ENCODE measurements at regions of chr7 and their contacts with region 1.

Region 1: GRCh38 chr7:140640727-140641523 is at the start of gene DENND2A:
- H3K4me3 ChIP-seq: peak within 1 kb of the TSS; percentile 68
- H3K27ac ChIP-seq: peak within 1 kb of the TSS; percentile 38; the same call in 1 of the 2 replicates
- H3K4me1 ChIP-seq: no peaks in the 10 kb centered on the region
- CTCF ChIP-seq: no peak

Region 2: GRCh38 chr7:140342727-140343514 is 298.0 kb before region 1 on chr7:
- CTCF ChIA-PET with region 1: no interaction called
- POLR2A ChIA-PET with region 1: no interaction called
- H3K4me3 ChIP-seq: no peak overlapping the region
- H3K27ac ChIP-seq: no peak overlapping the region
- H3K4me1 ChIP-seq: no peaks in the 10 kb centered on the region
- CTCF ChIP-seq: no peak; the same call in 1 of the 2 replicates

Region 3: GRCh38 chr7:140581411-140581810 is 59.5 kb before region 1 on chr7:
- CTCF ChIA-PET with region 1: no interaction called
- POLR2A ChIA-PET with region 1: no interaction called
- H3K4me3 ChIP-seq: no peak overlapping the region
- H3K27ac ChIP-seq: no peak overlapping the region
- H3K4me1 ChIP-seq: no peaks in the 10 kb centered on the region
- CTCF ChIP-seq: no peak

Region 4: GRCh38 chr7:140609646-140610045 is 31.3 kb before region 1 on chr7:
- CTCF ChIA-PET with region 1: no interaction called
- POLR2A ChIA-PET with region 1: no interaction called
- H3K4me3 ChIP-seq: no peak overlapping the region
- H3K27ac ChIP-seq: no peak overlapping the region
- H3K4me1 ChIP-seq: no peaks in the 10 kb centered on the region
- CTCF ChIP-seq: no peak

Region 5: DNA sequence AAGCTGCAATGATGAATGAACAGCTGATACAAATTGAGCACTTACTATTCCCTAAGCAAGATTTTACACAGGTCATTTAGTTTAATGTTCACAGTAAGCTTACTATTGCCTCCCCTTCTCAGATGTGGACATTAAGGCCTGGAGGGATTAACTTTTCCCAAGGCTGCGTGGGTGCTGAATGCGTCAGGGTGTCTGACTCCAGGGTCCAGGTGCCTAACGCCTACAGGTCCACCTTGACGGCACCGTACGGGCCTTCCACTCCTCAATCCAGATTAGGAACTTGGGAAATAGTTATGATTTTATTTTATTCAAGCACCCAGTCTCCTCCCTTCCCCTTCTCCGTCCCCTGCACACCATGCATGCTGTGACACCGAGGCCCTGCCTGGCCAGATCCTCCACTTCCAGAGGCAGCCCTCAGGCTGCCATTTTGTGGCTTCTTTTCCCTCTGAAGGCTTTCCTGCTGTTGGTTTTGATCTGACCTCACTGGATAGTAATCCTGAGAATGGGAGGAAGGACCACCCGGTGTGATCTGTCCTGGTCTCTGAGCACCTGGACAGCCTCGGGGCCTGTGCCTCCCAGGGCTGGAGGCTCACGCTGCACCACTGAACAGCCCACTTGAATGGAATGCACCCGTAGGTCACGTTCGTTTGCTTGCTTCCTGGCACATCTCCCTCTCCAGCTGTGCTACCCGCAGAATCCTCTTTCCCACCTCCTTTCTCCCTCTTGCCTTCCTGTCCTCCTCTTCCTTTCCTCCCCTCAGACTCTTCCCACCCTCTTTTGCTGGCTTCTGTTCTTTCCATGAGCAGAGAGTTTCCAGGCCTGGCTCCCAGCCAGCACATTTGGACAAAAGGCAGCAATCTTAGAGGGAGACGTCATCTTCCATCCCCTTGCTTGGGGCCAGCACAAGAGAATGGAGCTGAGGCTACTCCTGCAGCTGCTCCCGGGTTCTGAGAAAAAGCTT is 14.7 kb before region 1 on chr7:
- CTCF ChIA-PET with region 1: interaction called, 7 read pairs
- POLR2A ChIA-PET with region 1: interaction called, 10 read pairs
- H3K4me3 ChIP-seq: peak overlapping the region; percentile 0; the same call in 1 of the 2 replicates
- H3K27ac ChIP-seq: peak overlapping the region; percentile 1; the same call in 1 of the 2 replicates
- H3K4me1 ChIP-seq: no peaks in the 10 kb centered on the region
- CTCF ChIP-seq: no peak